ENCODE measurements at regions of chr3 and their contacts with region 1.

Region 1: GRCh38 chr3:20511863-20512505 is 326.0 kb upstream of the SGO1 start:
- DNase-seq: peak in 1 of 2 donors; percentile 64
- H3K4me3 ChIP-seq: no peak overlapping the region
- H3K27ac ChIP-seq: no peak overlapping the region
- H3K4me1 ChIP-seq: no peaks in the 10 kb centered on the region
- H3K27me3 ChIP-seq: no peaks in the 10 kb centered on the region
- CTCF ChIP-seq: peak in 3 of 7 experiments; percentile 8 to 24 (median 22)
- EP300 ChIP-seq: no peak
- POLR2A ChIP-seq: no peak

Region 2: GRCh38 chr3:20870106-20870899 is 358.3 kb after region 1 on chr3:
- intact Hi-C with region 1: no loop called
- DNase-seq: no peak
- H3K4me3 ChIP-seq: no peak overlapping the region
- H3K27ac ChIP-seq: no peak overlapping the region
- H3K4me1 ChIP-seq: no peaks in the 10 kb centered on the region
- H3K27me3 ChIP-seq: no peaks in the 10 kb centered on the region
- CTCF ChIP-seq: no peak
- EP300 ChIP-seq: no peak
- POLR2A ChIP-seq: no peak

Region 3: GRCh38 chr3:21484057-21484827 is 972.3 kb after region 1 on chr3:
- intact Hi-C with region 1: loop called (anchors 10 kb)
- DNase-seq: peak; percentile 65 to 81
- H3K4me3 ChIP-seq: no peak overlapping the region
- H3K27ac ChIP-seq: no peak overlapping the region
- H3K4me1 ChIP-seq: no peaks in the 10 kb centered on the region
- H3K27me3 ChIP-seq: no peaks in the 10 kb centered on the region
- CTCF ChIP-seq: peak in 5 of 7 experiments; percentile 33 to 65 (median 52)
- EP300 ChIP-seq: no peak
- POLR2A ChIP-seq: no peak